WTC11 (cell line): ENCODE measurements at regions of chr11 and their contacts with region 1.

Region 1: DNA sequence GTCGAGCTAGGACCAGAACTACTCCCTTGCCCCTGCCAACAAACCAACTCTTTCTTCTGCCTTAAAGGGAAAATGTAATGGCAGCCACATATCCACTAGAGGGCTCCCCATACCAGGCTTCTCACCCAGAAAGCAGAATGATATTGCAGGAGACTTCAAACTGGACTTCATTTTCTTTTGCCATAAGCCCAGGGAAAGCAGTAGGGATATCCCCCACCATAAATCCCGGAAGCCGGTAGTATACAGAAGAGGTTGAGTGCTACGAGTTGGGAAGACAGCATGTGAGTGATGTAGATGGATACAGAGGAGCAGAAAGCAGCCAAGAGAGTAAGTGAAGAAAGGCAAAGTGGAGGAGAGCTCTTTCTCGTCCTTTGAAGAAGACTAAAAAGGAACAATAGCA is 12.1 kb downstream of the PLAAT5 start:
- DNase-seq: peak; percentile 36
- ATAC-seq: peak; percentile 93
- H3K4me3 Mint-ChIP-seq: no peak overlapping the region
- H3K27ac Mint-ChIP-seq: no peak overlapping the region
- H3K4me1 Mint-ChIP-seq: peaks cover 14% of the 10 kb centered on the region
- H3K27me3 Mint-ChIP-seq: no peaks in the 10 kb centered on the region; the same call in 1 of the 2 replicates
- CTCF ChIP-seq: peak; percentile 73

Region 2: DNA sequence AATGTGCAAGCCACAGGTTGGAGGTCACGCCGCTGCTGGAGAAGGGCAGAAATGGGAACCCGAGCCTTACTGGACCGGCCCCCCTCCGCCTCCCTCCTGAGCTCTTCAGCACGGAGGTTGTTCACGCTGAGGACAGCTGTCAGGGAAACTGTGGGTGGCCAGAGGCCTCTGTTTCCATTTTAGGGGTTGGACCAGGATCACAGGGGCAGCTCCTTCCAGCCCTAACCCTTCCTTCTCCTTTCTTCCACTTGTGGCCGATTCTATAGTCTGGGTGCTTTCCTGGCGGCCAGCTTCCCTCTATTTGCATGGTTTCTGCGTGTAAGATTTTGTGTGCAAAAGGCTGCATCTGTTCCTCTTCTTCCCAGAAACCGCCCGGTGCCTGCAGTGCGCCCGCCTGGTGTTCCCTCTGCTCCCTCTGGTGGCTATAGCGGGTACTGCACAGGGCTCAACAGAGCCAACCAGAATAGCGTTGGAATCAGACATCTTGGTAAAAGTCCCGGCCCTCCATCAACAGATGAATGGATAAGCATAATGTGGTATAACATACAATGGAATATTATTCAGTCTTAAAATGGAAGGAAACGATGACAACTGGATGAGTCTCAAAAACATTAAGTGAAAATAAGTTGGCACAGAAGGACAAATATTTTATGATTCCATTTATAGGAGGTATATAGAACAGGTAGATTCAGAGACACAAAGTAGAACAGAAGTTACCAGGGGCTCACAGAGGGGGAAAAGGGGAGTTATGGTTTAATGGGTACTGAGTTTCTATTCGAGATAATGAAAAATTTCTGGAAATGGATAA is 454.9 kb before region 1 on chr11:
- CTCF ChIA-PET with region 1: no interaction called
- POLR2A ChIA-PET with region 1: no interaction called
- DNase-seq: peak; percentile 91
- ATAC-seq: peak; percentile 60
- H3K4me3 Mint-ChIP-seq: no peak overlapping the region
- H3K27ac Mint-ChIP-seq: no peak overlapping the region
- H3K4me1 Mint-ChIP-seq: peaks cover 16% of the 10 kb centered on the region
- H3K27me3 Mint-ChIP-seq: peaks cover 14% of the 10 kb centered on the region
- CTCF ChIP-seq: peak; percentile 100

Region 3: DNA sequence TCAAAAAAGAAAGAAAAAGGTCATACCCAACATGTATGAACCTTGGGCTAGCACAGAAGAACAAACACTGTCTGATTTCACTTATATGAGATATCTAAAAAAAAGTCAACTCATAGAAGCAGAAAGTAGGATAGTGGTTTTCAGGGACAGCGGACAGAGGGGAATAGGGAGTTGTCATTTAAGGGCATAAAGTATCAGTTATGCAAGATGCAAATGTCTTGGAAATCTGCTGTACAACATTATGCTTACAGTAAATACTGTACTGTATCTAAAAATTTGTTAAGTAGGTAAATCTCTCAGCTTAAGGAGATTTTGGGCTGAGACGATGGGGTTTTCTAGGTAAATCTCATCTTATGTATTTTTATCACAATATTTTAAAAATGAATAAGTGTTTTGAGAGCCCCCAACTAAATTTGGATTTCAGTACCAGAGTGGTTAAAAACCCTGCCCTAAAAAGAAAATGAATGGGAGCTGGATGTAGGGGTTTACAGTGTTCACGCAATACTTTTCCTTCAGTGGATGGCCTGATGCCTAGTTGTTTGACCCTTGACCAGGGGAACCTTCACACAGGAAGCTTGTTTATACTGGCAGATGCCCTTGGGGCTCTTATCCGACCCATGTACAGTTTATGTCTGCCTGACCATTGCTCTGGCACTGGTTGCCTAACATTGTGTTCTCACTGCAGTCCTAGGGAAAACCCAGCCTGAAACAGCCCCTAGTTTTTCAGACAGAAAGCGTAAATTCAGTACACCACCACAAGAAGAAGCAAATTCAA is 74.5 kb before region 1 on chr11:
- CTCF ChIA-PET with region 1: no interaction called
- POLR2A ChIA-PET with region 1: no interaction called
- DNase-seq: no peak
- ATAC-seq: no peak
- H3K4me3 Mint-ChIP-seq: no peak overlapping the region
- H3K27ac Mint-ChIP-seq: no peak overlapping the region
- H3K4me1 Mint-ChIP-seq: no peaks in the 10 kb centered on the region
- H3K27me3 Mint-ChIP-seq: peaks cover under 1% of the 10 kb centered on the region; the same call in 1 of the 2 replicates
- CTCF ChIP-seq: no peak

Region 4: GRCh38 chr11:63427971-63428508 is 50.9 kb before region 1 on chr11:
- CTCF ChIA-PET with region 1: interaction called, 16 read pairs
- POLR2A ChIA-PET with region 1: no interaction called
- DNase-seq: peak; percentile 49
- ATAC-seq: peak; percentile 88
- H3K4me3 Mint-ChIP-seq: no peak overlapping the region
- H3K27ac Mint-ChIP-seq: no peak overlapping the region
- H3K4me1 Mint-ChIP-seq: peaks cover 15% of the 10 kb centered on the region
- H3K27me3 Mint-ChIP-seq: peaks cover 17% of the 10 kb centered on the region
- CTCF ChIP-seq: peak; percentile 22; the same call in 1 of the 2 replicates

Region 5: GRCh38 chr11:63490551-63491239 is 11.8 kb after region 1 on chr11 and contains the start of gene PLAAT5:
- CTCF ChIA-PET with region 1: interaction called, 46 read pairs
- POLR2A ChIA-PET with region 1: interaction called, 3 read pairs
- DNase-seq: peak; percentile 56
- ATAC-seq: peak; percentile 63
- H3K4me3 Mint-ChIP-seq: peak within 1 kb of the TSS; percentile 77
- H3K27ac Mint-ChIP-seq: peak within 1 kb of the TSS; percentile 90
- H3K4me1 Mint-ChIP-seq: peaks cover 40% of the 10 kb centered on the region
- H3K27me3 Mint-ChIP-seq: peaks cover 18% of the 10 kb centered on the region
- CTCF ChIP-seq: no peak
- total RNA-seq, gene PLAAT5: 14.7 to 23.0 TPM (median 16.0 TPM) in 3 replicates

Region 6: DNA sequence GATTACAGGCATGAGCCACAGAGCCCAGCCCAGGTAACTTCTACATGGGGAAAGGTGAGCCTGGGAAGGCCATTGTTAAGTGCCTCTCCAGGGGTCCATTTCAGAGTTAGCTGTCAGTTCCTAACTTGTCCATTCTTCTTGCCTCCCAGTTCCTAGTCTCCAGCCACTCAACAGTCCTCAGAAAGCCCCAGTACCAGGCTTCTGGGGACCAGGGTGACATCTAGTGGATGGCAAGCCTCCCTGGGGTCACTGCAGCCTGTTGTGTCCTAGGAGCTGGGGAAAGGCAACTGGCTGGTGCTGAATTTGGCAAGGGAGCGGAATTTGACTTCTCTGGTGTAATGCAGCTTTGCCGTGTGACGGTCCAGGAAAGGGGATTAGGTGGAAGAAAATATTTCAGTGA is 29.1 kb after region 1 on chr11:
- CTCF ChIA-PET with region 1: interaction called, 92 read pairs
- POLR2A ChIA-PET with region 1: no interaction called
- DNase-seq: peak; percentile 68
- ATAC-seq: peak; percentile 77
- H3K4me3 Mint-ChIP-seq: no peak overlapping the region
- H3K27ac Mint-ChIP-seq: no peak overlapping the region
- H3K4me1 Mint-ChIP-seq: peaks cover 63% of the 10 kb centered on the region
- H3K27me3 Mint-ChIP-seq: peaks cover 6% of the 10 kb centered on the region; the same call in 1 of the 2 replicates
- CTCF ChIP-seq: no peak

Region 7: DNA sequence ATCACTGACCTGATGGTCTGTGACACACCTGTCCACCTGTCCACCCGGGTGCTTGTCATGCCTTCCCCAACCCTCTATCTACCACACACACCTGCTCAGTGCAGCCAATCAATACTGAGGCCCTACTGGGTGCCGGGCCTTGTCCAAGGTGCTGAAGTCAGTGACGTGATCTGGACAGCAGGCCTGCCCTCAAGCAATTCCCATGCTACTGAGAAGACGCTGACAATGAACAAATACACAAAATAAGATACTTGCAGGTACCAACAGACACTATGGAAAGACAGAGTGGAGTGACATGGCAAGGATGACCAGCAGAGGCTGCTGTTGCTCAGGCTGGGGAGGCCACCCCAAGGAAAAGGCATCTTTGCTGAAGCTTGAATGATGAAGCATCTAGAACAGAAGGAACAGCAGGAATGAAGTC is 114.1 kb after region 1 on chr11:
- CTCF ChIA-PET with region 1: interaction called, 12 read pairs
- POLR2A ChIA-PET with region 1: no interaction called
- DNase-seq: peak; percentile 49
- ATAC-seq: peak; percentile 82
- H3K4me3 Mint-ChIP-seq: no peak overlapping the region
- H3K27ac Mint-ChIP-seq: peak overlapping the region; percentile 34
- H3K4me1 Mint-ChIP-seq: peaks cover 12% of the 10 kb centered on the region
- H3K27me3 Mint-ChIP-seq: no peaks in the 10 kb centered on the region
- CTCF ChIP-seq: no peak

Region 8: GRCh38 chr11:63621931-63622782 is 143.3 kb after region 1 on chr11:
- CTCF ChIA-PET with region 1: interaction called, 13 read pairs
- POLR2A ChIA-PET with region 1: no interaction called
- DNase-seq: no peak
- ATAC-seq: no peak
- H3K4me3 Mint-ChIP-seq: no peak overlapping the region
- H3K27ac Mint-ChIP-seq: no peak overlapping the region
- H3K4me1 Mint-ChIP-seq: peaks cover 31% of the 10 kb centered on the region
- H3K27me3 Mint-ChIP-seq: no peaks in the 10 kb centered on the region; the same call in 1 of the 2 replicates
- CTCF ChIP-seq: no peak

Region 9: GRCh38 chr11:63635762-63636465 is 157.0 kb after region 1 on chr11:
- CTCF ChIA-PET with region 1: interaction called, 61 read pairs
- POLR2A ChIA-PET with region 1: no interaction called
- DNase-seq: peak; percentile 82
- ATAC-seq: peak; percentile 96
- H3K4me3 Mint-ChIP-seq: no peak overlapping the region
- H3K27ac Mint-ChIP-seq: peak overlapping the region; percentile 2; the same call in 1 of the 2 replicates
- H3K4me1 Mint-ChIP-seq: peaks cover 4% of the 10 kb centered on the region
- H3K27me3 Mint-ChIP-seq: no peaks in the 10 kb centered on the region
- CTCF ChIP-seq: peak; percentile 69